Posterior vena cava (tissue), 2 donors: ENCODE measurements at regions of chr11 and their contacts with region 1.

Region 1: DNA sequence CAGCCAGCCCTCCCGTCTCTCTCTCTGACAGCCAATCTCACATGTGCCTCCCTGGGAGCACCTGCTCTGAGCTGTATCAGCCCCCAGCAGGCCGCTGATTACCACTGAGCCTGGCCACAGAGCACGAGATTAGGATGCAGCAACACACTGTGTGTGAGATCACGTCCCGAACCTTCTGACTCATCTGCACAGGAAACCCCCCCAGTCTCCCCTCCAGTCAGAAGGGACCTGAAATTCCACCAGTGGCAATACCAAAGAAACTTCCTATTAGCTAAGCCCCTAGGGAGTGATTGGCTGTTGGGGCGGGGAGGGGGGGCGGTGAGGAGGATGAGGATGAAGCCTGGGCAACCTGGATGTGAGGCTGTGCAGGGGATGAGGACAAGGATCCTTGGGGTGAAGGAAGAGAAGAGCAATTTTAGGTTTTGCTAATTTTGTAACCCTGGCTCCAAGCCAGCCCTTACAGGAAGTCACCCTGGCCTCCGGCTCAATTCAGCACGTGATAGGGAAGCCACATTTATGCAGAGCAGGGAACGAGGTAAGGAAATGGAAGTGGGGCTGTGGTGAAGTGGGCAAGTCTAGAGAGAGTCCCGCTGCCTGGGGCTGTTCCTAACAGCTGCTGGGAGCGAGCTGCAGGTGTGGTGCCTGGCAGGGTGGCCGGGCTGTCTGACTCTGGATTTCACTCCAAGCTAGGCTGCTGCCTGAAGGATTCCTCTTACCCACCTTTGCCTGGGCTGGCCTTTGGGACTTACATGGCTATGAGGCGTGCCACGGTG is 1.9 kb downstream of the SLC43A3 start:
- DNase-seq: peak; percentile 92

Region 2: DNA sequence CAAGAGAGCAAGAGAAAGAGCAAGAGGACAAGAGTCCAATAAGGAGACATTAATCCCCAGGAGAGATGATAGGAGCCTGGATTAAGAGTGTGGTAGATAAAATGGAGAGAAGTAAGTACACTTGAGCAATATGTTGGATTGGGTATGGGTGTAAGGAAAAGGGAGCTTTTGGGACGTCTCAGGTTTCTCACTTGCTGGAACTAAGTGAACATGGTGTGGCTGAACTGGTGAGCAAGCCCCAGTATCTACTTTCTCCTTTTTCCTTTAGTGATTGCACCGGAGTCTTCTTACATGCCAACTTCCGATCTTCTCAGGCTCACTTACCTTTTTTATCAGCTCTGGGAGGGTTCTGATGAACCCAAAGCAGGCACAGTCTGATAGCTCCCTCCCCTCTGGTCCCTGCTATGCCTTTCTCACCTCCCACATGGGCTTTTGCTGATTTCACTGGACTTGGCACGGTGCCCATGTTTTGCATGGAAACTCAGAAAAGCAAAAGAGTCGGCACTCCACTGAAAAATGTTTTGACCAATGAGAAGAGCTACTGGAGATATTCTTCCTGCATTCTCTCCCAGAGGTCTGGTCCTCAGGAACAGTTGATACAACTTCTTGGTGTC is 173.4 kb before region 1 on chr11:
- intact Hi-C with region 1: no loop called
- DNase-seq: no peak

Region 3: DNA sequence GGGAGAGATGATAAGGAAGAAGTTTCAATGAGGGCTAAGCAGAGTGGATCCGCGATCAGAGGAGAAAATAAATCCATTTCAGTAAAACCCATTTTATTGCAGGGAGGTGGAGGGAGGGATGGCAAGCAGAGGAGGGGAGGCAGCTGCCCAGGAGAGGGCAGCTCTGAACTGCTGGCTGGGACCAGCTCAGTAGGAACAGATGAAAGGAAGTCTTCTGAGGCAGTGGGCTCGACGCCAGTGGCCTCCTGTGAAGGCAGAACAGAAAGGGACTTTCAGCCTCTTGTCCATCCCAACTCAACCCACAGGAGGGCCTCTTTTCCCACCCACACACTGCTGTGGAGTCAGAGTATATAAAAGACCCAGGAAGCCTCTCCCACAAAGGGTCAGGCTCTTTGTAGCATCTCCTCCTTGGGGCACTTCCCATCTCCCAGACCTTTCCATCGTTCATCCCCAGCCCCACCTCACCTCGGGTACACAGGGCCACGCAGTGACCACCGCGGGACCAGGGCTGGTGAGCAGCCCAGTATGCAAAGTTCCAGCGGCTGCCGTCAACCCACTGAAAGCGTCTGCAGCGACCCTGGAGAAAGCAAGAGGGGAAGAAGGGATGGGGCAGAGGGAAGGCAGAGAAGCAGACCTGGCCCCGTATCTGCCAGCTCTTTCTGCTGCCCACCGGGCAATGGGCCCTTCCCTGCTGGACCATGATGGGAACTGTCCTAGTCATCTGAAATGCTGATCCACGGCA is 37.5 kb before region 1 on chr11:
- intact Hi-C with region 1: loop called in 1 of 2 experiments (anchors 1 kb)
- DNase-seq: peak; percentile 69

Region 4: DNA sequence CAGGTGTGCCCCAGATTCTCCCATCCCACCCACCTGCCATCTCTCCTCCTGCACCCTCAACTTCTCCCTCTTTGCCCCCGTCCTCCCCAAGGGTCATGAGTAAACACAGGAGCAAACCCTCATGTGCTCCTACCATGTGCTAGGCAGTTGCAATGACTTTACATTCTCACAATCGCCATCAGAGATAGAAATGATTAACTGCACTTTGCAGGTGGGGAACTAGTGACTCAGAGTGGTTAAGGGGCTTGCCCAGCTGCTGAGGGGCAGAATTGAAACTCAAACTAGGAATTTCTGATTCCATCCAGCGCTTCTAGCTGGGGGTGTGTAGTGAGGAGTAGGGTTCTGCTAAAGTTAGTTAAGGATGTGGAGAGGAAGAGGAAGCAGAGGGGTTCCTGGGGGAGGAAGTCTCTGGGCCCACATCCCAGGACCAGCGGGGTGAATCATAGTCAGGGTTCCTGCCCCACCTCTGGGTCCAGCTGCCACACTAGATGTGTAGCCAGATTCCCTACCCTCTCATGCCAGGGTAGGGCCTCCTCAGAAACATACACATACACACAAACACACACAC is 18.6 kb before region 1 on chr11:
- intact Hi-C with region 1: no loop called
- DNase-seq: peak; percentile 81

Region 5: DNA sequence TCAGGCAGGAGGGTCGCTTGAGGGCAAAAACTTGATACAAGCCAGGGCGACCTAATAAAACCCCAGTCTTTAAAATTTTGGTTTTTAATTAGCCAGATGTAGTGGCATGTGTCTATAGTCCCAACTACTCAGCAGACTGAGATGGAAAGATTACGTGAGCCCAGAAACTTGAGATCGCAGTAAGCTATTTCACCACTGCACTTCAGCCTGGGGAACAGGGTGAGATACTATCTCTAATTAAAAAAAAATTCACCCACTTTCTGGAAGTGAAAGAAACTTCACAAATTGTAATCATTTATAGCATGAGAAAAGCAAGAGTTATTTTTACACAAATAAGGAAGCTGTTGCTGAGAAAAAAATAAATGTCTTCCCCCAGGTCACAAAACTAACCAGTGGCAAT is 1420.4 kb after region 1 on chr11:
- intact Hi-C with region 1: no loop called
- DNase-seq: no peak